ENCODE measurements at regions of chrX and their contacts with region 1.

Region 1: GRCh38 chrX:22192417-22193060 is 80.2 kb upstream of the CBLL2 start:
- DNase-seq: peak in 1 of 2 donors; percentile 73
- H3K4me3 ChIP-seq: no peak overlapping the region
- H3K27ac ChIP-seq: no peak overlapping the region
- H3K4me1 ChIP-seq: no peaks in the 10 kb centered on the region
- H3K27me3 ChIP-seq: no peaks in the 10 kb centered on the region
- CTCF ChIP-seq: peak; percentile 56 to 74 (median 68)

Region 2: DNA sequence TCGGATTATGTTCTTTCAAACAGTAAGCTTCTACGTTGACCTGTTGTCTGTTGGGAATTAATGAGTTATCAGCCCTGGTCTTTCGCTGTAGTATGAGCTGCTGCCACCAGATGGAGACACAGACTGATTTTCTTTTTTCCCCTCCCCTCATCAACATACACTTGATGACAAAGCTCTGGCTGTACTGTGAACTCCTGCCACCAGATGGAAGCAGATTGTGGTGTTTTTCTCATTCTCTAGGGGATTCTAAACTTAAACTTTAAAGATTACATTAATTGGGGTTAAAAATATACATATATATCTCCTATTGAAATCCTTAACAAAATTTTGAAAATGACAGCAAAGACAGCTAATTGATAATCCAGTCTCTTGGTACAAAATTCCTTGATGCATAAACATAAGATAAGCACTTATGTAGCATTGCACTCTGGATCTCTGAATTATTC is 207.2 kb before region 1 on chrX:
- intact Hi-C with region 1: loop called (anchors 5 kb)
- DNase-seq: peak in 1 of 2 donors; percentile 81
- H3K4me3 ChIP-seq: no peak overlapping the region
- H3K27ac ChIP-seq: no peak overlapping the region
- H3K4me1 ChIP-seq: no peaks in the 10 kb centered on the region
- H3K27me3 ChIP-seq: no peaks in the 10 kb centered on the region
- CTCF ChIP-seq: peak; percentile 81 to 84 (median 83)

Region 3: DNA sequence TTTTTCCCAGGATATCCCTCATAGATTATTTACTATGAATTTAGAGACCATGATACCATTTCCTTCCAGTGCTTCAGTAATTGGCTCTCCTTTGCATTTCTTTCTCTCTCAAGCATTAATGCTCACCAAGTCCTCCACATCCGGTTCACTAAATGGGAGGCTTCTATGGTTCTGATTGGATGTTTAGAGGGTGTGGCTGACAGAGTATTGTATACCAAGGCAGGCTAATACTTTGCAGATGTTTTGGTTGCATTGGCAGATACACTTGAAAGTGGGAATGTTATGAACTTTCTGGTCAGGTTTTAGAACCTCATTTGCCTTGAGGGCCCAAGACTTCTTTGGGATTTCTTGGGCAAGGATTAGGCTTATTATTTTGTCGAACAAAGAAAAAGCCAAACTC is 104.3 kb after region 1 on chrX:
- intact Hi-C with region 1: no loop called
- DNase-seq: no peak
- H3K4me3 ChIP-seq: no peak overlapping the region
- H3K27ac ChIP-seq: no peak overlapping the region
- H3K4me1 ChIP-seq: peaks cover 0 to 5% of the 10 kb centered on the region in 2 donors
- H3K27me3 ChIP-seq: no peaks in the 10 kb centered on the region
- CTCF ChIP-seq: no peak